CD8-positive, alpha-beta T cell (primary cell): ENCODE measurements at regions of chr4 and their contacts with region 1.

Region 1: DNA sequence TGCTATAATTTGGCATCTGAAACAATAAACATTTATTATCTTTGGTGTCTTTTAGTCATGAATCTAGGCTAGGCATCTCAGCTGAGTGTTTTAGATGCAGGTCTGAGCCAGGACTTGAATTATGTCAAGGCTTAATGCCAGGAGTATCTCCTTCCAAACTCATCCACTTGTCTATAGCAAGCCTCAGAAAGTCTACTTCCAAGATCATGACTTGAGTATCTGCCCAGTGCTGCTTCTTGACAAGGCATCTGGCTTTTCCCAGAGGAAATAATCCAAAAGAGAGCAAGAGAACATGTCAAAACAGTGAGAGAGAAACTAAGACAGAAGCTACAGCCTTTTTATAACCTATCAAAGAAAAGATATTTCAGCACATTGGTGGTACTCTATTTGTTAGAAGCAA is 1052.1 kb upstream of the PCDH10 start:
- DNase-seq: no peak
- ATAC-seq: no peak
- H3K4me3 ChIP-seq: no peak overlapping the region
- H3K4me3 Mint-ChIP-seq: no peak overlapping the region
- H3K27ac ChIP-seq: no peak overlapping the region
- H3K27ac Mint-ChIP-seq: no peak overlapping the region
- H3K4me1 ChIP-seq: no peaks in the 10 kb centered on the region
- H3K4me1 Mint-ChIP-seq: no peaks in the 10 kb centered on the region
- H3K27me3 ChIP-seq: no peaks in the 10 kb centered on the region
- H3K27me3 Mint-ChIP-seq: no peaks in the 10 kb centered on the region
- CTCF ChIP-seq: no peak

Region 2: GRCh38 chr4:131370826-131371225 is 726.2 kb before region 1 on chr4:
- CTCF ChIA-PET with region 1: no interaction called
- POLR2A ChIA-PET with region 1: no interaction called
- intact Hi-C with region 1: no loop called
- DNase-seq: no peak
- ATAC-seq: no peak
- H3K4me3 ChIP-seq: no peak overlapping the region
- H3K4me3 Mint-ChIP-seq: no peak overlapping the region
- H3K27ac ChIP-seq: no peak overlapping the region
- H3K27ac Mint-ChIP-seq: no peak overlapping the region
- H3K4me1 ChIP-seq: no peaks in the 10 kb centered on the region
- H3K4me1 Mint-ChIP-seq: no peaks in the 10 kb centered on the region
- H3K27me3 ChIP-seq: no peaks in the 10 kb centered on the region
- H3K27me3 Mint-ChIP-seq: no peaks in the 10 kb centered on the region
- CTCF ChIP-seq: no peak

Region 3: DNA sequence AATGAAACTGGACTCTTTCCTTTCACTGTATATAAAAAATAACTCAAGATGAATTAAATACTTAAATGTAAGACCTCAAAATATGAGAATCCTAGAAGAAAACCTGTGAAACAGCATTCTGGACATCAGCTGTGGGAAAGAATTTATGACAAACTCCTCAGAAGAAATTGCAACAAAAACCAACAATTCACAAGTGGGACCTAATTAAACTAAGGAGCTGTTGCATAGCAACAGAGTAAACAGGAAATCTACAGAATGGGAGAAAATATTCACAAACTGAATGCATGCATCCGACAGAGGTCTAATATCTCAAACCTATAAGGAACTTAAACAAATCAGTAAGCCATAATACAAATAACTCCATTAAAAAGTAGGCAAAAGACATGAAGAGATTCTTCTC is 200.3 kb after region 1 on chr4:
- CTCF ChIA-PET with region 1: no interaction called
- POLR2A ChIA-PET with region 1: no interaction called
- intact Hi-C with region 1: no loop called
- DNase-seq: no peak
- ATAC-seq: no peak
- H3K4me3 ChIP-seq: no peak overlapping the region
- H3K4me3 Mint-ChIP-seq: no peak overlapping the region
- H3K27ac ChIP-seq: no peak overlapping the region
- H3K27ac Mint-ChIP-seq: no peak overlapping the region
- H3K4me1 ChIP-seq: no peaks in the 10 kb centered on the region
- H3K4me1 Mint-ChIP-seq: no peaks in the 10 kb centered on the region
- H3K27me3 ChIP-seq: no peaks in the 10 kb centered on the region
- H3K27me3 Mint-ChIP-seq: no peaks in the 10 kb centered on the region
- CTCF ChIP-seq: no peak

Region 4: DNA sequence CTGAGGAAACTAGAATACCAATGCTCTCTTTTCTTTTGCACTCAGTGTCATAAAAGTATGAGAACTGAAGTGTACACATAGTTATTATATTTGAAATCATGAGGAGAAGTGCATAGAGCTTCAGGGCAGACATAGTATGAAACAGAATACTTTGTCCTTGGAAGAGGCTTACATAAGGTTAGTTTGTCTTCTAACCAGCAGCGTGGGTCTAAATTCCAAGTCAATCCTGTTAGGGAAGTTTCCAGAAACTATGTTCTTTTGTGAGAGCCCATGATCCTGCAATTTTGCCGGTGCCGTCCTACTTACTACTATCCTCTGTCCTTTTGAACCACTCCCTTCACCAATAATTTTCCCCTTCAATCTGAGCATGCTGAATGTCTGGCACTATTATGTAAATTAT is 1948.4 kb after region 1 on chr4:
- CTCF ChIA-PET with region 1: no interaction called
- POLR2A ChIA-PET with region 1: no interaction called
- intact Hi-C with region 1: loop called in 1 of 2 experiments (anchors 10 kb)
- DNase-seq: no peak
- ATAC-seq: no peak
- H3K4me3 ChIP-seq: no peak overlapping the region
- H3K4me3 Mint-ChIP-seq: no peak overlapping the region
- H3K27ac ChIP-seq: no peak overlapping the region
- H3K27ac Mint-ChIP-seq: no peak overlapping the region
- H3K4me1 ChIP-seq: no peaks in the 10 kb centered on the region
- H3K4me1 Mint-ChIP-seq: no peaks in the 10 kb centered on the region
- H3K27me3 ChIP-seq: no peaks in the 10 kb centered on the region
- H3K27me3 Mint-ChIP-seq: no peaks in the 10 kb centered on the region
- CTCF ChIP-seq: no peak